HepG2 (cell line): ENCODE measurements at regions of chr9 and their contacts with region 1.

Region 1: DNA sequence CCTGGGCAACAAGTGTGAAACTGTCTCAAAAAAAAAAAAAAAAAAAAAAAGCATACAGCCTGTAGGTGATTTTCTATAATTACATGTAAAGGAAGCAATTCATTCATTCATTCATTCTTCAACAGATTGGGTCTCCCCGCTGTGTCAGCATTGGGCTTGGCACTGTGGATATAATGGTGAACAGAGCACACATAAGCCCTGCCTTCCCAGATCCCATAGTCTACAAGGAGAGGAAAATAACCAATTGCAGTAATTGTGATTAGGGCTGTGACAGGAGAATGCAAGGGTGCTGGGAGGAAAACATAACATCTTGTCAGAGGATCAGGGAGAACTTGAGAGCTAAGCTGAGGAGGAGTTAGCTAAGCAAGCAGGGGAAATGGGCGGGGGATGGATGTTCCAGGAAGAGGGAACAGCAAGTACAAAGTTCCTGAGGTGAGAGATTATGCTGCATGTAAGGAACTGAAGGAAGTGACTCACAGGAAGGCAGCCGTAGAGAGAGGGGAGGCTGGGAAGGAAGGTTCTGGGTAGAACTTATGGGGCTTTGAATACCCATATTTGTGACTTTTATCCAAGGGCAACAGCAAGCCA is 24.0 kb upstream of the KLF9 start:
- DNase-seq: peak; percentile 24
- ATAC-seq: no peak; the same call in 2 of the 3 replicates
- H3K4me3 ChIP-seq: no peak overlapping the region
- H3K27ac ChIP-seq: no peak overlapping the region
- H3K4me1 ChIP-seq: peaks cover 48% of the 10 kb centered on the region
- H3K27me3 ChIP-seq: no peaks in the 10 kb centered on the region; a peak in 1 of 5 replicates
- CTCF ChIP-seq: no peak
- EP300 ChIP-seq: no peak
- POLR2A ChIP-seq: no peak
- RAD21 ChIP-seq: no peak

Region 2: GRCh38 chr9:69773258-69773657 is 665.2 kb before region 1 on chr9:
- CTCF ChIA-PET with region 1: no interaction called
- POLR2A ChIA-PET with region 1: no interaction called
- in situ Hi-C with region 1: no loop called
- intact Hi-C with region 1: no loop called
- DNase-seq: no peak
- ATAC-seq: no peak
- H3K4me3 ChIP-seq: no peak overlapping the region
- H3K27ac ChIP-seq: no peak overlapping the region
- H3K4me1 ChIP-seq: 0 out of 2 replicates have a peak, but pooled peaks cover 8% of the 10 kb centered on the region
- H3K27me3 ChIP-seq: no peaks in the 10 kb centered on the region
- CTCF ChIP-seq: no peak
- EP300 ChIP-seq: no peak
- POLR2A ChIP-seq: no peak
- RAD21 ChIP-seq: no peak

Region 3: DNA sequence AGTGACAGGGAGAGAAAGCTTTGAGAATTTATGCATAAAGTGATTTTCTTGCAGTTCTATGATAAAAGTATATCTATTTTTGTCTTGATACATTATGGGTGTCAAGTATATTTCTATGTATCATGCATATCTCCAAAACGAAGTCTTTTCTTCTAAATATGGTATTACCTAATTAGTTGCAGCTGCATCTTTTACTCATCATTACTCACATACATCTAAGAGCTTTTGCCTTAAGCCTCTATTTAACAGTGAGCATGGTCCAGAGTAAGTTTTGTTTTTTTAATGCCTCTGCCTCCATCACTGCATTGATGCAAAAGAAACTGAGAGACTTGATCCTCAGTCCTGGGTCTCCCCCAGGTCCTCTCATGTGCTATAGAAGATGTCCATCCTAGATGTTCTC is 219.7 kb before region 1 on chr9:
- CTCF ChIA-PET with region 1: no interaction called
- POLR2A ChIA-PET with region 1: no interaction called
- in situ Hi-C with region 1: no loop called
- intact Hi-C with region 1: no loop called
- DNase-seq: no peak
- ATAC-seq: no peak
- H3K4me3 ChIP-seq: no peak overlapping the region
- H3K27ac ChIP-seq: no peak overlapping the region
- H3K4me1 ChIP-seq: 0 out of 2 replicates have a peak, but pooled peaks cover 5% of the 10 kb centered on the region
- H3K27me3 ChIP-seq: no peaks in the 10 kb centered on the region
- CTCF ChIP-seq: no peak
- EP300 ChIP-seq: no peak
- POLR2A ChIP-seq: no peak
- RAD21 ChIP-seq: no peak

Region 4: GRCh38 chr9:70297141-70297540 is 141.3 kb before region 1 on chr9:
- CTCF ChIA-PET with region 1: no interaction called
- POLR2A ChIA-PET with region 1: no interaction called
- in situ Hi-C with region 1: no loop called
- intact Hi-C with region 1: no loop called
- DNase-seq: no peak
- ATAC-seq: no peak
- H3K4me3 ChIP-seq: no peak overlapping the region
- H3K27ac ChIP-seq: no peak overlapping the region
- H3K4me1 ChIP-seq: no peaks in the 10 kb centered on the region
- H3K27me3 ChIP-seq: no peaks in the 10 kb centered on the region
- CTCF ChIP-seq: no peak
- EP300 ChIP-seq: no peak
- POLR2A ChIP-seq: no peak
- RAD21 ChIP-seq: no peak

Region 5: GRCh38 chr9:70419546-70420266 is 18.7 kb before region 1 on chr9:
- CTCF ChIA-PET with region 1: no interaction called
- POLR2A ChIA-PET with region 1: interaction called, 79 read pairs
- in situ Hi-C with region 1: no loop called
- intact Hi-C with region 1: loop called (anchors 1 kb)
- DNase-seq: peak; percentile 91
- ATAC-seq: peak; percentile 61
- H3K4me3 ChIP-seq: peak overlapping the region; percentile 61 to 84 (median 67)
- H3K27ac ChIP-seq: peak overlapping the region; percentile 100
- H3K4me1 ChIP-seq: peaks cover 39% of the 10 kb centered on the region
- H3K27me3 ChIP-seq: peaks cover 0 to 4% of the 10 kb centered on the region in 2 experiments; a peak in 2 of 5 replicates
- CTCF ChIP-seq: 0 out of 2 replicates have a peak, but pooled peaks have one; percentile 6
- EP300 ChIP-seq: peak; percentile 22 to 78; a peak in 3 of 4 replicates
- POLR2A ChIP-seq: peak in 1 of 2 experiments; percentile 97; a peak in 2 of 4 replicates
- RAD21 ChIP-seq: 0 out of 2 replicates have a peak, but pooled peaks have one; percentile 10